ENCODE measurements at regions of chr16 and their contacts with region 1.

Region 1: GRCh38 chr16:80084685-80085084 is 456.1 kb upstream of the DYNLRB2 start:
- DNase-seq: peak; percentile 21
- H3K4me3 Mint-ChIP-seq: no peak overlapping the region
- H3K27ac Mint-ChIP-seq: no peak overlapping the region
- H3K4me1 Mint-ChIP-seq: no peaks in the 10 kb centered on the region
- H3K27me3 Mint-ChIP-seq: no peaks in the 10 kb centered on the region
- CTCF ChIP-seq: peak; percentile 32

Region 2: DNA sequence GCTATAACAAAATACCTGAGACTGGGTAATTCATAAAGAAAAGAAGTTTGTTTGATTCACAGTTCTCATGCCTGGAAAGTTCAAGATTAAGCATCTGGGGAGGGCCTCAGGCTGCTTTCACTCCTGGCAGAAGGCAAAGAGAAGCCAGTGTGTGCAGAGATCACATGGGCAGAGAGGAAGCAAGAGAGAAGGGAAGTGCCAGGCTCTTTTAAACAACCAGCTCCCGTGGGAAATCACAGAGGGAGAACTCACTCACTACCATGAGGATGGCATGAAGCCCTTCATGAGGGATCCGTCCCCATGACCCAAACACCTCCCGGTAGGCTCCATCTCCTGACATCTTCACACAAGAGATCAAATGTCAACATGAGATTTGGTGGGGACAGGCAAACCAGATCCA is 985.8 kb before region 1 on chr16:
- CTCF ChIA-PET with region 1: no interaction called
- intact Hi-C with region 1: loop called (anchors 5 kb)
- DNase-seq: no peak
- H3K4me3 Mint-ChIP-seq: no peak overlapping the region
- H3K27ac Mint-ChIP-seq: no peak overlapping the region
- H3K4me1 Mint-ChIP-seq: no peaks in the 10 kb centered on the region
- H3K27me3 Mint-ChIP-seq: no peaks in the 10 kb centered on the region
- CTCF ChIP-seq: no peak

Region 3: GRCh38 chr16:80197741-80198201 is 113.1 kb after region 1 on chr16:
- CTCF ChIA-PET with region 1: no interaction called
- intact Hi-C with region 1: no loop called
- DNase-seq: no peak
- H3K4me3 Mint-ChIP-seq: no peak overlapping the region
- H3K27ac Mint-ChIP-seq: peak overlapping the region; percentile 31
- H3K4me1 Mint-ChIP-seq: peaks cover 15% of the 10 kb centered on the region
- H3K27me3 Mint-ChIP-seq: no peaks in the 10 kb centered on the region
- CTCF ChIP-seq: no peak

Region 4: DNA sequence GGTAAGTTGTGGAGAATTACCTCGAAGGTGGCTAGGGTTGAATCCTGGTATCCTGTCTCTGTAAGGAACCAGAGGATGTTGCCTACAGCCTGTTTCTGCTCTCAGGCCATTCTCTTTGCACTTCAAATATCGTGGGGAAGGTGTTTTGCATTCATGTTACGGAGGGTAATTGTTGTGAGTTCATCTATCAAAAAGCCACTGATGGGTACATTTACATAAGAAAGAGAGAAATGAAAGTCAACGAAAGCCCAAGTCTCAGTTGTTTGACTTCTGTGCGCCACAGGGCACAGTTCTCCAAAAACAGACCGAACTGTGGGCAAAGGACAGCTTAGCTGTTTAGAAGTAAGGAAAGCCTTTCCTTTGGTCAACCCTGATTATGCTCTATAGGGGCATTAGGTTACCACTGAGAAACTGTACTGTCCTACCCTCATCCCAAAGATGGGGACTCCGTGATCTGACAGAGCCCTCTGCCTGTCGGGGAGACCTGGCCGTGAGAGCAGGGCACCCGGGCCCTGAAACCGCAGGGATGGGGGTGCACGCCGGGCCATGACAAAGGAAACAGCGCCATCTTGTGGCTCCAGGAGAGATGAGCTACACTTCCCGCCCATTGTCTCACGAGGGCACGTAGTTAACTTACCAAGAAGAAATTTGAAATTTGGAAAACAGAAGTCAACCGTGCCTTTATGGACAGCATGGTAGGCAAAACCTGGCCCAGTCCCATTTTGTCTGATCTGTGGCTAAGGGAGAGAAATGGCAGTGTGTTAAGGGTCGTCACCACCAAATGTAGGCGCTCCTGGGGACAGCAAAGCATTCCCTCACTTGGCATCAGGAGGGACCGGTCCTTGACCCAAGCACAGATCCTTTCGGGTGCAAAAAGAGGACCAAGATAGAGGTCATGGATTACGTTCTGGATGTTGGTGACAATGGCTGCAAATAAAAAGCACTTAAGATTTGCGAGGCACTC is 381.6 kb after region 1 on chr16:
- CTCF ChIA-PET with region 1: no interaction called
- intact Hi-C with region 1: loop called (anchors 10 kb)
- DNase-seq: peak; percentile 73
- H3K4me3 Mint-ChIP-seq: no peak overlapping the region
- H3K27ac Mint-ChIP-seq: no peak overlapping the region
- H3K4me1 Mint-ChIP-seq: peaks cover 18% of the 10 kb centered on the region
- H3K27me3 Mint-ChIP-seq: no peaks in the 10 kb centered on the region
- CTCF ChIP-seq: peak; percentile 92